Body of pancreas (tissue), 4 donors: ENCODE measurements at regions of chr13 and their contacts with region 1.

Region 1: DNA sequence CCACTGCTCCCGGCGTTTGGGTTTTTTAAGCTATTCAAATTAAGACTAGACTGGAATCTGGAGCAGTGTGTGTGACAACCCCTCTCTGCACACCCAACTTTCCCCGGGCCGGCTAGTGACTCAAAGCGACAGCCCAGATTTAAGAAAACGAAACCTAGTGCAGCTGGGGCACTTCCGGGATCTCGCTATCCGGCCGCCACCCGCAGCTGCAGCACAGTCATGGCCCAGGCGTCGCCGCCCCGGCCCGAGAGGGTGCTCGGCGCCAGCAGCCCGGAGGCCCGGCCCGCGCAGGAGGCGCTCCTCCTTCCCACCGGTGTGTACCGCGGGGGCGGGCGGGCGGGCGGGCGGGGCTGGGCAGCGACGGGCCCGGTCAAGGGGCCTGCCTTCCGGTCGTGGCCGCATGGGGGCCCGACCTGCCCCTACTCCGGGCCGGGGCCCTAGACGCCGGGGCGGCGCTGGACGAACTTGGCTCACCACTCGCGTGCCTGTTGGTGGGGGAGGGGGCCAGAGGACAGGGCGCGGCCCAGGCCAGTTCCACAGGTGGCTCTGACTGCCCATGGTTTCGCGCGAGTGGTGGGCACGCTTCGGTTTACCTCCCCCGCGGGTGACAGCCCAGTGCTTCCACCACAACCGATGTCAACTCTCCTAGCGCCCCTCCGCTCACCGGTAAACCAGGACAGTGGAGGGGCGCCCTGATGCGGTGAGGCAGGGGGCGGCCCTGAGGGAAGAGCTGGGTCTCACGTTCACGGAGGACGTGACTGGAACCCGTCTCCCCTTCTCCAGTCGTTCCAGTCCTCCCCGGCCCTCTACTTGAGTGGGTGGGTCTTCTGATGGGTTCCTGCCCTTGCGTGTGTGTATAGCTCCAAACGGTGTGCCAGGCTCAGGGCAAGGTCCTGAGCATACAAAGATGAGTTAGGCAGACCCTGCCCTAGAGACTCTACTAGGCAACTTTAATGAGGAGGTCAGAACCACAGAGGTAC is at the start of gene PHF11:
- DNase-seq: peak; percentile 85 to 90 (median 88)
- ATAC-seq: peak; percentile 86
- H3K4me3 ChIP-seq: peak within 1 kb of the TSS; percentile 55 to 64
- H3K27ac ChIP-seq: peak within 1 kb of the TSS; percentile 93 to 98 (median 97)
- H3K4me1 ChIP-seq: peaks cover 16% of the 10 kb centered on the region
- H3K27me3 ChIP-seq: no peaks in the 10 kb centered on the region
- CTCF ChIP-seq: peak in 5 of 7 experiments; percentile 25 to 38 (median 32)
- POLR2A ChIP-seq: peak; percentile 37 to 88 (median 78)
- total RNA-seq, gene PHF11: 22.7 to 30.1 TPM

Region 2: DNA sequence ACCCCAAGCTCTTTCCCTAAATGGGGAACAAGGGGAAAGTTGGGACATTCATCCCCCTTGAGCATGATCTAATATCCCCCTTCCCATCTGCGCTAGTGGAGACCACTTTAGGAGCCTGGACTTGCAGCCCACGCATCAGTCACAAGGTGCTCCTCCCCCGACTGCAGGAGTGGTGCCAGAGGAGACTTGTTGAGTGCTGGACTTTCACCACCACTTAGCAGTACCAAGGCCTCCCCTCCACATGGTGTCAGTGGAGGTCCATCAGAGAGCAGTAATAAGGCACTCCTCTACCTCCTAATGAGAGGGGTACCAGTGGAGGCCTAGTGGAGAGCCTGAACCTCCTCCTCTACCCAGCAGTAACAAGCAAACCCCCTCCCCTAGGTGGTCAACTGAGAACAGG is 74.7 kb before region 1 on chr13:
- intact Hi-C with region 1: no loop called
- DNase-seq: peak in 3 of 4 donors; percentile 19 to 23 (median 23)
- ATAC-seq: no peak
- H3K4me3 ChIP-seq: no peak overlapping the region
- H3K27ac ChIP-seq: no peak overlapping the region
- H3K4me1 ChIP-seq: no peaks in the 10 kb centered on the region
- H3K27me3 ChIP-seq: no peaks in the 10 kb centered on the region
- CTCF ChIP-seq: peak in 4 of 7 experiments; percentile 26 to 37 (median 31)
- POLR2A ChIP-seq: no peak

Region 3: GRCh38 chr13:49585220-49586157 is 89.4 kb after region 1 on chr13 and contains the start of gene RCBTB1:
- intact Hi-C with region 1: loop called (anchors 10 kb)
- DNase-seq: peak; percentile 78 to 84 (median 84)
- ATAC-seq: peak; percentile 89
- H3K4me3 ChIP-seq: peak within 1 kb of the TSS; percentile 57 to 92
- H3K27ac ChIP-seq: peak within 1 kb of the TSS; percentile 80 to 92 (median 84)
- H3K4me1 ChIP-seq: peaks cover 23% of the 10 kb centered on the region
- H3K27me3 ChIP-seq: no peaks in the 10 kb centered on the region
- CTCF ChIP-seq: peak in 1 of 7 experiments; percentile 3
- POLR2A ChIP-seq: peak; percentile 30 to 77 (median 70)
- total RNA-seq, gene RCBTB1: 6.3 to 12.2 TPM